ENCODE measurements at regions of chr3 and their contacts with region 1.

Region 1: DNA sequence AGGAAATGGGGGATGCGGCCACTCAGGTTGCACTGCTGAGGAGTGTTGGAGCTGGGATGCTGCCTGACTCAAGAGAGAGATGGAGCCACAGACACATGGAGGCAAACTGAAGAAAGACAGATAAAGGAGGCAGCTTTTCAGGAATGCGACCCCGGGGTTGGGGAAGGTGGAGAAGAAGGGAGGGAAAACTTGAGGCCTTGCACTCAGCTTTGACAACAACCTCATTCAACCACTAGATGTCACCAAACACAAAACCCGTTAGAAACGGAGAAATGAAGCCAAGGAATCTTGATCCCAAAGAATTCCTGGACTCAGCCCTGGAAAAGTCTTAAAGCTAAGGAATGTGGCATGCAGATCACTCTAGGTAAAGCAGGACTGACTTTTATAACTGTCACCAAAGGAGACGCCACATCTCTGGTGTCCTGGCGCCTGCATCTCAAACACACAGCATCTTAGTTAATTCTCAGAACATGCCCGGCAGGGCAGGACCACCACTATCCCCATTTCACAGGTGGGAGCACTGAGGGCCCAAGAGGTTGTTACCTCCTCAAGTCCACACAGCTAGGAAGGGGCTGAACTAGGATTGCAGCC is 59.6 kb upstream of the LMCD1 start:
- DNase-seq: no peak
- ATAC-seq: peak; percentile 46 to 79
- H3K4me3 ChIP-seq: no peak overlapping the region
- H3K27ac ChIP-seq: peak overlapping the region in 1 of 4 donors; percentile 15
- H3K4me1 ChIP-seq: peaks cover 0 to 9% of the 10 kb centered on the region in 2 donors
- H3K27me3 ChIP-seq: no peaks in the 10 kb centered on the region
- CTCF ChIP-seq: peak; percentile 75 to 87 (median 82)
- POLR2A ChIP-seq: no peak

Region 2: GRCh38 chr3:8482960-8483665 is 41.0 kb after region 1 on chr3:
- in situ Hi-C with region 1: no loop called
- intact Hi-C with region 1: loop called (anchors 2 kb)
- DNase-seq: peak; percentile 81 to 90
- ATAC-seq: peak; percentile 90 to 98
- H3K4me3 ChIP-seq: no peak overlapping the region
- H3K27ac ChIP-seq: peak overlapping the region; percentile 79 to 96 (median 88)
- H3K4me1 ChIP-seq: peaks cover 35 to 37% of the 10 kb centered on the region in 2 donors
- H3K27me3 ChIP-seq: no peaks in the 10 kb centered on the region
- CTCF ChIP-seq: no peak
- POLR2A ChIP-seq: no peak

Region 3: GRCh38 chr3:8560366-8561007 is 118.4 kb after region 1 on chr3:
- in situ Hi-C with region 1: no loop called
- intact Hi-C with region 1: loop called (anchors 5 kb)
- DNase-seq: no peak
- ATAC-seq: peak; percentile 40
- H3K4me3 ChIP-seq: no peak overlapping the region
- H3K27ac ChIP-seq: peak overlapping the region; percentile 75 to 93 (median 80)
- H3K4me1 ChIP-seq: peaks cover 59 to 72% of the 10 kb centered on the region in 2 donors
- H3K27me3 ChIP-seq: no peaks in the 10 kb centered on the region
- CTCF ChIP-seq: no peak
- POLR2A ChIP-seq: no peak

Region 4: GRCh38 chr3:8607234-8608040 is 165.4 kb after region 1 on chr3:
- in situ Hi-C with region 1: loop called in 2 of 4 experiments (anchors 5 kb)
- intact Hi-C with region 1: loop called (anchors 1 kb)
- DNase-seq: peak; percentile 66 to 74
- ATAC-seq: peak; percentile 95 to 100
- H3K4me3 ChIP-seq: no peak overlapping the region
- H3K27ac ChIP-seq: peak overlapping the region in 2 of 4 donors; percentile 26 to 37
- H3K4me1 ChIP-seq: peaks cover 27 to 28% of the 10 kb centered on the region in 2 donors
- H3K27me3 ChIP-seq: no peaks in the 10 kb centered on the region
- CTCF ChIP-seq: peak; percentile 77 to 85 (median 82)
- POLR2A ChIP-seq: no peak

Region 5: GRCh38 chr3:8622873-8623691 is 181.0 kb after region 1 on chr3:
- in situ Hi-C with region 1: loop called in 1 of 4 experiments (anchors 5 kb)
- intact Hi-C with region 1: loop called (anchors 1 kb)
- DNase-seq: peak; percentile 27 to 55
- ATAC-seq: peak; percentile 77 to 81
- H3K4me3 ChIP-seq: peak overlapping the region in 1 of 4 donors; percentile 4
- H3K27ac ChIP-seq: no peak overlapping the region
- H3K4me1 ChIP-seq: peaks cover 11 to 12% of the 10 kb centered on the region in 2 donors
- H3K27me3 ChIP-seq: no peaks in the 10 kb centered on the region
- CTCF ChIP-seq: peak; percentile 86 to 95 (median 92)
- POLR2A ChIP-seq: no peak